ENCODE measurements at regions of chr7 and their contacts with region 1.

Region 1: DNA sequence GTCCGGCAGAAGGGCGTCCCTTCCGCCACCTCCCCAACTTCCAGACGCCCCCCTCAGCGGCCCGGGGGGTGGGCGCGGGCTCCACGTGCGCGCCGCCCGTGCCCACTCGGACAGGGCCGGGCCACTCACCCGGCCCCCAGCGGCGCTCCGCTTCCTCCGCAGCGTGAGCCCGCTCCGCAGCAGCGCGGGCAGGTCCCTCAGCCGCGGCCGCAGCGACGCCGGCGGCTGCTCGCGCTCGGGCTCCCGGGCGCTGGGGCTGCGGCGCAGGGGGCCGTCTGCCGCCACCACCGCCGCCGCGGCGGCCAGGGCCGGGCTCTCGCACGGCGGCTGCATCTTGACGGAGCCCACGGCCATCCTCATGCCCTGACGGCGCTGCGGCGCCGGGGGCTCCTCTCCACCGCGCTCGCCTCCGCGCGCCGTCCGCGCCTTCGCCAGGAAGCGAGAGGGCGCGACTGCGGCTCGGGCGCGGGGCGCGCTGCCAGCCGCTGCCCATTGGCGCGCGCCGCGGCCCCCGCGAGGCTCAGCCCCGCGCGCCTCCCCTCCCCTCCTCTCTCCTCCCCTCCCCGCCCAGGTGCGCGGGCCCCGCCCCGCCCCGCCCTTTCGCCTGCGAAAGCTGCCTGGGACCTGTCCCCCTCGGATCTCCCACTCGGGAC is at the start of gene RAPGEF5:
- DNase-seq: peak; percentile 68
- H3K4me3 Mint-ChIP-seq: peak within 1 kb of the TSS; percentile 76
- H3K27ac Mint-ChIP-seq: peak within 1 kb of the TSS; percentile 73
- H3K4me1 Mint-ChIP-seq: peaks cover 30% of the 10 kb centered on the region
- H3K27me3 Mint-ChIP-seq: no peaks in the 10 kb centered on the region
- CTCF ChIP-seq: no peak
- total RNA-seq, gene RAPGEF5: 1.9 TPM in 2 replicates

Region 2: GRCh38 chr7:22332461-22332870 is 24.4 kb before region 1 on chr7:
- CTCF ChIA-PET with region 1: interaction called, 5 read pairs
- POLR2A ChIA-PET with region 1: interaction called, 11 read pairs
- intact Hi-C with region 1: no loop called
- DNase-seq: peak; percentile 14
- H3K4me3 Mint-ChIP-seq: no peak overlapping the region
- H3K27ac Mint-ChIP-seq: no peak overlapping the region
- H3K4me1 Mint-ChIP-seq: peaks cover 9% of the 10 kb centered on the region
- H3K27me3 Mint-ChIP-seq: no peaks in the 10 kb centered on the region
- CTCF ChIP-seq: no peak

Region 3: DNA sequence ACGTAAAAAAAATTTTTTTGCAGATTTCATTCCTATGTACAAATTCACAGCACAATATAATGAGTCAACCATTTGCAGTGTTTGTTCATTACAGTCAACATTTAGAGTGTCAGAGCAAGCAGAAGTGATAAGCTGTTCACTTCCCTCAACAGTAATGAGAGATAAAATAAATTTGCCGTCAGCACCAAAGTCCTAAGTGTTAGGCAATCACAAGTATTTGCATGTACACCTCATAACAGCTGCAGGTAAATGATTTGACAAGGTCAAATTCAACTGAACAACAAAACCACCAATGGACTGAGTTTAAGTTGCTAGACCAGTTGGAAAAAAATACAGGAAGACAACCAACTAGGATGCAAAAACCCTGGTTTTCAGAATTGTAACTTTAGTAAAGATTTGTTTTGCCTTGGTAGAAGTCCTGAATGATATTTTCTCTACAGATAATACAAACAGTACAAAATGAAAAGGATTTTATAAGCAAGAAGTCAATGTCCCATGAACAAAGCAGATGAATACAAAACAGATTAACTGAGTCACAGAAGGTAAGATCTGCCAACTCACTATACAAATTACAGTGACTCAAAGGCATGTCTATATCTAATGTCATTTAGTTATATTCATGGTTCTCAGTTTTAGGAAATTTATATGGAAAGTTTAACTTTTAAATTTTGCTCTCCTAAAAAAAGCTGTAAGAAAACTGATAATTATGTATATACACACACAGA is 10.3 kb before region 1 on chr7:
- CTCF ChIA-PET with region 1: interaction called, 3 read pairs
- POLR2A ChIA-PET with region 1: interaction called, 33 read pairs
- intact Hi-C with region 1: no loop called
- DNase-seq: no peak
- H3K4me3 Mint-ChIP-seq: no peak overlapping the region
- H3K27ac Mint-ChIP-seq: no peak overlapping the region
- H3K4me1 Mint-ChIP-seq: peaks cover 31% of the 10 kb centered on the region
- H3K27me3 Mint-ChIP-seq: no peaks in the 10 kb centered on the region
- CTCF ChIP-seq: no peak

Region 4: GRCh38 chr7:22402250-22402649 is 45.4 kb after region 1 on chr7:
- CTCF ChIA-PET with region 1: interaction called, 3 read pairs
- POLR2A ChIA-PET with region 1: interaction called, 11 read pairs
- intact Hi-C with region 1: no loop called
- DNase-seq: no peak
- H3K4me3 Mint-ChIP-seq: no peak overlapping the region
- H3K27ac Mint-ChIP-seq: no peak overlapping the region
- H3K4me1 Mint-ChIP-seq: peaks cover 9% of the 10 kb centered on the region
- H3K27me3 Mint-ChIP-seq: no peaks in the 10 kb centered on the region
- CTCF ChIP-seq: no peak

Region 5: DNA sequence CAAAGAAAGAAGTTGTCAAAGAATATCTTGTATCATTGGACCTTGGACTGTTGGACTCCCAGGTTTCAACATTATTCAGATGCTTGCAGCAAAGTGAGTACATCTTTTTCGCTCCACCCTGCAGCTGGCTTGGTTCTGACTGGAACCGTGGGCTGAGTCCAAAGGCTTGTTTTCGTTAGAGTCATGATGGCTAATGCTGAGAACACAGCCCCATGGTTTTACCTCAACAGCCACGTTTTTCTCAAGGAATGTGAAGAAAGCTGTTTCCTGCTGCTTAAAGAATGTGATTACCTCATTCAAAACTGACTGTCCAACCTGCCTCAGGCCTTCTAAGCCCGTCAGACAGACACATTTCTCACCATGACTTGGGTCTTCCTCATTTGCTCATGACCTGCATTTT is 73.6 kb after region 1 on chr7:
- CTCF ChIA-PET with region 1: no interaction called
- POLR2A ChIA-PET with region 1: interaction called, 14 read pairs
- intact Hi-C with region 1: no loop called
- DNase-seq: peak; percentile 58
- H3K4me3 Mint-ChIP-seq: no peak overlapping the region
- H3K27ac Mint-ChIP-seq: peak overlapping the region; percentile 49
- H3K4me1 Mint-ChIP-seq: peaks cover 24% of the 10 kb centered on the region
- H3K27me3 Mint-ChIP-seq: no peaks in the 10 kb centered on the region
- CTCF ChIP-seq: no peak

Region 6: DNA sequence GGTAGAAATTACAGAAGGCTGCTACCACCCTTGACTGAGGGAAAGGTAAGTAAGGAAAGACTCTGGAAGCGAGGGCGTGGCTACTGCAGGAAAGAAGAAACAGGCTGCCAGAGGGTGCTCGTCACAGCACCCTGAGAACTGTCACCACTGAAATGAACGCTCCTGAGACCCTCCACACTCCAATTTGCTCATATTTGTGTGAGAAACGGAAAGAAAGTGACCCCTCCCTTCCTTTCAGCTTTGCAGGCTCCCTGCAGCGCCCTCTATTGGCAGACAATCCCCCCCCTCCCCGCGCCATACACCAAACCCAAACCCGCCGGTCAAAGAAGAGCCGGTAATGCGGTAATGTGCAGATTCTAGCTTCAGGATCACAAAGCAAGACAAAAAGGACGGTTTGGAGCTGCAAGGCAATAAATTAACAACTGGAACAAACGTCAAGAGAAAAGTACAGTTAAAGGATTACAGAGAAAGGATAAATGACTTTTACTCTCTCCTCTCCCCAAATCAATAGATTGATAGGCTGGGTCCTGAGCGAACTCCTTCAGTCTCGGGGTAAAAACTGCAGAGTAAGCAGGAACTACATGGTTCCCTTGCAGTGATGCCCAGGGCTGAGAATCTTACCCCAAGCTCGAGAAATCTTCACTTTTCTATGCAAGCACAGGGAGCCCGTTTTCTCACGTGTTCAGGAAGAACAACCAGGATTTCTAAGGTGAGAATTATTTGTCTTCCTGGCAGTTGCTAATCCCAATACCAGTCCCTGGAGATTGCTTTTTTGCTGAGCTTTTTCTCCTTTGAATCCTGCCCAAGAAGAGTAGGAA is 95.5 kb after region 1 on chr7:
- CTCF ChIA-PET with region 1: interaction called, 3 read pairs
- POLR2A ChIA-PET with region 1: no interaction called
- intact Hi-C with region 1: loop called (anchors 10 kb)
- DNase-seq: peak; percentile 52
- H3K4me3 Mint-ChIP-seq: peak overlapping the region; percentile 56
- H3K27ac Mint-ChIP-seq: no peak overlapping the region
- H3K4me1 Mint-ChIP-seq: peaks cover 9% of the 10 kb centered on the region
- H3K27me3 Mint-ChIP-seq: no peaks in the 10 kb centered on the region
- CTCF ChIP-seq: peak; percentile 59